Psoas muscle (tissue), 8 donors: ENCODE measurements at regions of chr6 and their contacts with region 1.

Region 1: GRCh38 chr6:43454696-43455530 is 435 bp downstream of the DLK2 start:
- DNase-seq: peak; percentile 88 to 94
- ATAC-seq: peak; percentile 93 to 96 (median 96)
- H3K4me3 ChIP-seq: peak overlapping the region; percentile 63
- H3K27ac ChIP-seq: no peak overlapping the region
- H3K4me1 ChIP-seq: peaks cover 4% of the 10 kb centered on the region
- H3K27me3 ChIP-seq: peaks cover 0 to 47% (median 11%) of the 10 kb centered on the region in 3 donors
- CTCF ChIP-seq: no peak

Region 2: GRCh38 chr6:43496370-43497128 is 41.6 kb after region 1 on chr6:
- intact Hi-C with region 1: loop called in 1 of 2 experiments (anchors 2 kb)
- DNase-seq: peak in 1 of 2 donors; percentile 60
- ATAC-seq: peak; percentile 32 to 53 (median 44)
- H3K4me3 ChIP-seq: no peak overlapping the region
- H3K27ac ChIP-seq: no peak overlapping the region
- H3K4me1 ChIP-seq: peaks cover 25% of the 10 kb centered on the region
- H3K27me3 ChIP-seq: no peaks in the 10 kb centered on the region
- CTCF ChIP-seq: peak; percentile 54

Region 3: GRCh38 chr6:43506667-43507471 is 52.0 kb after region 1 on chr6:
- intact Hi-C with region 1: loop called (anchors 1 to 2 kb)
- DNase-seq: peak; percentile 70 to 82
- ATAC-seq: peak; percentile 71 to 78 (median 77)
- H3K4me3 ChIP-seq: no peak overlapping the region
- H3K27ac ChIP-seq: no peak overlapping the region
- H3K4me1 ChIP-seq: peaks cover 8% of the 10 kb centered on the region
- H3K27me3 ChIP-seq: peaks cover 0 to 9% (median 0%) of the 10 kb centered on the region in 3 donors
- CTCF ChIP-seq: peak; percentile 97

Region 4: DNA sequence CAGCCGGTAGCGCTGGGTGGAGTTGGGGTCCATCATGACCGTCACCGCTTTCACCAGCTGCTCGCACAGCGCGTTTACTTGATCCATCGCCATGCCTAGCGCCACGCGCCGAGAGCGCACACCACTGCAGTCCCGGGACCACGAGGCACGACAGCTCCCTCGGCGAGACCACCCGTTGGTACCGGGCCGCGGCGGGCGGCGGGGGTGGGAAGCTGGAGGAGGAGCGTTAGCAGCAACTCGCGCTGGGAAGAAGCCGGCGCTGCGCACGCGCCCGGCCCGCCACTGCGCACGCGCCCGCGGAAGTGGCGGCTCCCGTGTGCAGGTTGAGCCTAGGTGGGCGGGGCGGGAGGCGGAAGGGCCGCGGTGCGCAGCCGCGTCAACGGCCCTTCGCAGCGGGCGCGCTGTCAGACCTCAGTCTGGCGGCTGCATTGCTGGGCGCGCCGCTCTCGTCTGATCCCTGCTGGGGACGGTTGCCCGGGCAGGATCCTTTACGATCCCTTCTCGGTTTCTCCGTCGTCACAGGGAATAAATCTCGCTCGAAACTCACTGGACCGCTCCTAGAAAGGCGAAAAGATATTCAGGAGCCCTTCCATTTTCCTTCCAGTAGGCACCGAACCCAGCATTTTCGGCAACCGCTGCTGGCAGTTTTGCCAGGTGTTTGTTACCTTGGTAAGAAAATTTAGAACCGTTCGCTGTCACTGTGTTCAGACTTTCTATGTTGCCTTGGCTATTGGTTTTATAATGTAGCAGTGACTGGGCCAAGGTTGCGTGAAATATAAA is 121.0 kb after region 1 on chr6 and contains the starts of genes POLH and XPO5:
- intact Hi-C with region 1: loop called in 1 of 2 experiments (anchors 10 kb)
- DNase-seq: peak; percentile 94 to 97
- ATAC-seq: peak; percentile 99
- H3K4me3 ChIP-seq: peak within 1 kb of the TSS; percentile 96
- H3K27ac ChIP-seq: peak within 1 kb of the TSS; percentile 83
- H3K4me1 ChIP-seq: peaks cover 13% of the 10 kb centered on the region
- H3K27me3 ChIP-seq: no peaks in the 10 kb centered on the region
- CTCF ChIP-seq: peak; percentile 25
- total RNA-seq, gene POLH: 3.6 to 6.4 (median 5.5) TPM
- total RNA-seq, gene XPO5: 17.5 to 40.1 (median 20.1) TPM